ENCODE measurements at regions of chr18 and their contacts with region 1.

Region 1: GRCh38 chr18:12702221-12703095 is at the starts of genes CEP76 and PSMG2:
- DNase-seq: peak; percentile 96
- ATAC-seq: peak; percentile 85
- H3K4me3 ChIP-seq: peak within 1 kb of the TSS; percentile 84 to 95 (median 86)
- H3K4me3 Mint-ChIP-seq: peak within 1 kb of the TSS; percentile 99
- H3K27ac ChIP-seq: peak within 1 kb of the TSS; percentile 96 to 100
- H3K27ac Mint-ChIP-seq: peak within 1 kb of the TSS; percentile 100
- H3K4me1 ChIP-seq: peaks cover 22 to 26% of the 10 kb centered on the region in 2 donors
- H3K4me1 Mint-ChIP-seq: peaks cover 37% of the 10 kb centered on the region
- H3K27me3 ChIP-seq: no peaks in the 10 kb centered on the region
- H3K27me3 Mint-ChIP-seq: no peaks in the 10 kb centered on the region
- CTCF ChIP-seq: no peak
- total RNA-seq, gene CEP76: 10.0 and 12.6 TPM in 2 replicates
- total RNA-seq, gene PSMG2: 61.2 and 64.1 TPM in 2 replicates

Region 2: DNA sequence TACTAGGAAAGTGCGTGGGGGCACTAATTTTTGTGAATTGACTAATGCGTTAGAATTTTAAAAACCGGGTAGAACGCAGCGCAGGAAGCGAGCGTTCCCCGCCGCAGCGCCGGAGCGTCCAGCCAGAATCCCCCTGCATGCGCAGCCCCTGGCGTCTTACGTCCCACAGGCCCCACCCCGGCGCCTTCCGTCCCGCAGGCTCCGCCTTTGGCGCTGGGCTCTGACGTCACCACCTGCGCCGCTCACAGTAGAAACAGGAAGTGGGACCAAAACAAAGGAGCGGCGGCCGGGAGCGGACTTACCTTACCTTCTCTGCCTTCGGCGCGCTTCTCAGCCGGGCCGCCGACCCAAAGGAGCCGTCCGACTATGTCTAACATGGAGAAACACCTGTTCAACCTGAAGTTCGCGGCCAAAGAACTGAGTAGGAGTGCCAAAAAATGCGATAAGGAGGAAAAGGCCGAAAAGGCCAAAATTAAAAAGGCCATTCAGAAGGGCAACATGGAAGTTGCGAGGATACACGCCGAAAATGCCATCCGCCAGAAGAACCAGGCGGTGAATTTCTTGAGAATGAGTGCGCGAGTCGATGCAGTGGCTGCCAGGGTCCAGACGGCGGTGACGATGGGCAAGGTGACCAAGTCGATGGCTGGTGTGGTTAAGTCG is 851.2 kb before region 1 on chr18 and contains the start of gene CHMP1B:
- CTCF ChIA-PET with region 1: no interaction called
- POLR2A ChIA-PET with region 1: no interaction called
- intact Hi-C with region 1: loop called (anchors 5 kb)
- DNase-seq: peak; percentile 98
- ATAC-seq: peak; percentile 94
- H3K4me3 ChIP-seq: peak within 1 kb of the TSS; percentile 85 to 100 (median 98)
- H3K4me3 Mint-ChIP-seq: peak within 1 kb of the TSS; percentile 100
- H3K27ac ChIP-seq: peak within 1 kb of the TSS; percentile 93 to 97
- H3K27ac Mint-ChIP-seq: peak within 1 kb of the TSS; percentile 99
- H3K4me1 ChIP-seq: peaks cover 28 to 31% of the 10 kb centered on the region in 2 donors
- H3K4me1 Mint-ChIP-seq: peaks cover 34% of the 10 kb centered on the region
- H3K27me3 ChIP-seq: no peaks in the 10 kb centered on the region
- H3K27me3 Mint-ChIP-seq: no peaks in the 10 kb centered on the region
- CTCF ChIP-seq: no peak
- total RNA-seq, gene CHMP1B: 52.2 and 55.4 TPM in 2 replicates

Region 3: GRCh38 chr18:12657684-12658425 is 44.6 kb before region 1 on chr18 and contains the start of gene SPIRE1:
- CTCF ChIA-PET with region 1: no interaction called
- POLR2A ChIA-PET with region 1: no interaction called
- intact Hi-C with region 1: loop called (anchors 2 kb)
- DNase-seq: peak; percentile 71
- ATAC-seq: peak; percentile 77
- H3K4me3 ChIP-seq: peak within 1 kb of the TSS in 4 of 5 experiments; percentile 32 to 67 (median 58)
- H3K4me3 Mint-ChIP-seq: peak within 1 kb of the TSS; percentile 94
- H3K27ac ChIP-seq: no peak within 1 kb of the TSS
- H3K27ac Mint-ChIP-seq: no peak within 1 kb of the TSS
- H3K4me1 ChIP-seq: peaks cover 9 to 11% of the 10 kb centered on the region in 2 donors
- H3K4me1 Mint-ChIP-seq: peaks cover 11% of the 10 kb centered on the region
- H3K27me3 ChIP-seq: peaks cover 0 to 34% (median 5%) of the 10 kb centered on the region in 4 experiments
- H3K27me3 Mint-ChIP-seq: peaks cover 26% of the 10 kb centered on the region
- CTCF ChIP-seq: no peak
- total RNA-seq, gene SPIRE1: 3.0 and 4.0 TPM in 2 replicates

Region 4: DNA sequence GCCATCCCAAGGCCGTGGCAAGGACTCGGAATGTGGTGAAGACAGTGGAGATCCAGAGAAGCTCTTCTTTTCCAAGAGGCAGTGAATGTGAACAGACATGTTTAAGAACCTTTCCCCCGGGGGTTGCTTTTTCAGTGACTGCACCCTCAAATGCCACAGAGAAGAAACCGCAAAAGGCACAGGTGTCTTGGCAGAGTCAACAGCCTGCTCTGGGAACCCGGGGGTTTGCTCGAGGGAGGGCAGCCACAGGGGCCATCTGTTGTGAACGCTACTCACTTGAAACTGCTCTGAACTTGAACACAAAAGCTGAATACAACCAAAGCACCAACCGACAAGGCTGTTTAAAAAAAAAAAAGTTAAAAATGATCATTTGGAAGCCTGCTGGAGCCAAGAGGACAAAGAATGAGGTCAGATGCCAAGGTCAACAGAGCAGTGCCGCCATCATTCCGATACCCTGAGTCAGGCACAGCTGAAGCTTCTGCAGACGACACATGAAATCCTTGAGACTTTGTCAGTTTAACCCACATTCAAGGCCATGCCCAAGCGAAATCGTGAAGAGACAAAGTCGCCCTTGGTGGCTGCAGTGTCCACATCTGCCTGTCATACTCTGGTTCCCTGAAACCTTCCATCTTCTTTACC is 47.7 kb after region 1 on chr18:
- CTCF ChIA-PET with region 1: no interaction called
- POLR2A ChIA-PET with region 1: no interaction called
- intact Hi-C with region 1: no loop called
- DNase-seq: peak; percentile 39
- ATAC-seq: peak; percentile 72
- H3K4me3 ChIP-seq: peak overlapping the region in 2 of 5 experiments; percentile 2 to 3
- H3K4me3 Mint-ChIP-seq: peak overlapping the region; percentile 61
- H3K27ac ChIP-seq: no peak overlapping the region
- H3K27ac Mint-ChIP-seq: peak overlapping the region; percentile 21
- H3K4me1 ChIP-seq: peaks cover 12 to 20% of the 10 kb centered on the region in 2 donors
- H3K4me1 Mint-ChIP-seq: peaks cover 17% of the 10 kb centered on the region
- H3K27me3 ChIP-seq: peaks cover 0 to 26% (median 2%) of the 10 kb centered on the region in 4 experiments
- H3K27me3 Mint-ChIP-seq: peaks cover 31% of the 10 kb centered on the region
- CTCF ChIP-seq: no peak

Region 5: GRCh38 chr18:12947355-12948041 is 245.0 kb after region 1 on chr18 and contains the start of gene SEH1L:
- CTCF ChIA-PET with region 1: no interaction called
- POLR2A ChIA-PET with region 1: no interaction called
- intact Hi-C with region 1: loop called (anchors 1 kb)
- DNase-seq: no peak
- ATAC-seq: peak; percentile 91
- H3K4me3 ChIP-seq: peak within 1 kb of the TSS; percentile 69 to 97 (median 75)
- H3K4me3 Mint-ChIP-seq: peak within 1 kb of the TSS; percentile 96
- H3K27ac ChIP-seq: peak within 1 kb of the TSS; percentile 88 to 89
- H3K27ac Mint-ChIP-seq: peak within 1 kb of the TSS; percentile 94
- H3K4me1 ChIP-seq: peaks cover 5 to 22% of the 10 kb centered on the region in 2 donors
- H3K4me1 Mint-ChIP-seq: peaks cover 29% of the 10 kb centered on the region
- H3K27me3 ChIP-seq: no peaks in the 10 kb centered on the region
- H3K27me3 Mint-ChIP-seq: no peaks in the 10 kb centered on the region
- CTCF ChIP-seq: no peak
- total RNA-seq, gene SEH1L: 46.4 and 48.1 TPM in 2 replicates

Region 6: GRCh38 chr18:13726232-13726971 is 1023.9 kb after region 1 on chr18 and contains the starts of genes FAM210A and RNMT:
- CTCF ChIA-PET with region 1: no interaction called
- POLR2A ChIA-PET with region 1: no interaction called
- intact Hi-C with region 1: loop called (anchors 1 kb)
- DNase-seq: peak; percentile 97
- ATAC-seq: peak; percentile 95
- H3K4me3 ChIP-seq: peak within 1 kb of the TSS; percentile 51 to 94 (median 88)
- H3K4me3 Mint-ChIP-seq: peak within 1 kb of the TSS; percentile 97
- H3K27ac ChIP-seq: peak within 1 kb of the TSS; percentile 83 to 94
- H3K27ac Mint-ChIP-seq: peak within 1 kb of the TSS; percentile 98
- H3K4me1 ChIP-seq: peaks cover 21 to 26% of the 10 kb centered on the region in 2 donors
- H3K4me1 Mint-ChIP-seq: peaks cover 48% of the 10 kb centered on the region
- H3K27me3 ChIP-seq: no peaks in the 10 kb centered on the region
- H3K27me3 Mint-ChIP-seq: no peaks in the 10 kb centered on the region
- CTCF ChIP-seq: peak; percentile 18
- total RNA-seq, gene FAM210A: 11.4 and 12.3 TPM in 2 replicates
- total RNA-seq, gene RNMT: 54.3 and 57.8 TPM in 2 replicates

Measured in B cell (primary cell).